Naive thymus-derived CD4-positive, alpha-beta T cell (primary cell): ENCODE measurements at regions of chr10 and their contacts with region 1.

Region 1: GRCh38 chr10:62528441-62528840 is 154.3 kb downstream of the ZNF365 start:
- DNase-seq: peak in 7 of 9 donors; percentile 42 to 83 (median 78)
- ATAC-seq: peak; percentile 95
- H3K4me3 ChIP-seq: no peak overlapping the region
- H3K4me3 Mint-ChIP-seq: peak overlapping the region; percentile 0 to 78 (median 70)
- H3K27ac ChIP-seq: peak overlapping the region; percentile 44
- H3K27ac Mint-ChIP-seq: peak overlapping the region; percentile 47 to 86 (median 75)
- H3K4me1 ChIP-seq: peaks cover 24 to 39% of the 10 kb centered on the region in 2 donors
- H3K4me1 Mint-ChIP-seq: peaks cover 32 to 49% (median 43%) of the 10 kb centered on the region in 7 donors
- H3K27me3 ChIP-seq: no peaks in the 10 kb centered on the region
- H3K27me3 Mint-ChIP-seq: peaks cover 0 to 15% (median 0%) of the 10 kb centered on the region in 5 donors

Region 2: DNA sequence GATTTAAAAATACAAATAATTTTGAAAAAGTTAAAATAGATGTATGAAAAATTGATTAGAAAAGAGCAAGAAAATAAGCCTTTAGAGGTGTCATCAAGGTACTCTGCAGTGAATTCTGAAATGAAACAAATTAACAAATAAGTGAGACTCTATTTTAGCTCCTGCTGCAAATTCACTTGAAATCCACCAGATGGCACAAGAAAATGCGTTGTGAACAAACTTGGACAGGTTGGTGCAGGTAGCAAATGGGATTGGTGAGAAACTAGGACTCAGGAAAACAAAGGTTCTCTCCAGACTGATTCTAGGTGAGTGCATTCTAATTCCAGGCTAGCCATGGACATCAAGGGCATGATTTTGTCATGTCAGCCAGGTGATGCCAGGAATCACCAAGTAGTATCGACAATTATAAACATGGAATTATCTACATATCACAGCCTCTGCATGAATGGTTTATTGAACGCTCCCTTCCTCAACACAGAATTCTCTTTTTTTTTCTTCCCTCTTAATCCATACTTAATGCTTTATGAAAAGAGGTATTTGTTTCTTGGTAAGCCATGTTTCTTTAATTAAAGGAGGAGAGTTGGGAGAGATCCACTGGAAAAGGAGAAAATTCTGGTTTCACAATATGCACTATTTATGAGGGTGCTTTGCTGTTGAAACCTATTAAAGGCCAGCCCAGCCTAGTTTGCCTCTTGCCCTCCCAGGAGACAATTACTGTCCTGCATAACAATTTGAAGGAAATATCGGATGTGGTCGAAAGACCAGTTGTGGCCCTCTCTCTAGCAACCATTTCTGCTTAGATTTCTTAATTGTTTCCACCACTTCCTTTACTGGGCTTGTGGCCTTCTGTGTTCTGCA is 36.2 kb before region 1 on chr10:
- CTCF ChIA-PET with region 1: no interaction called
- POLR2A ChIA-PET with region 1: no interaction called
- intact Hi-C with region 1: loop called (anchors 1 kb)
- DNase-seq: peak in 7 of 9 donors; percentile 14 to 53 (median 40)
- ATAC-seq: peak; percentile 54
- H3K4me3 ChIP-seq: no peak overlapping the region
- H3K4me3 Mint-ChIP-seq: no peak overlapping the region
- H3K27ac ChIP-seq: no peak overlapping the region
- H3K27ac Mint-ChIP-seq: no peak overlapping the region
- H3K4me1 ChIP-seq: no peaks in the 10 kb centered on the region
- H3K4me1 Mint-ChIP-seq: peaks cover 0 to 2% (median 0%) of the 10 kb centered on the region in 7 donors
- H3K27me3 ChIP-seq: no peaks in the 10 kb centered on the region
- H3K27me3 Mint-ChIP-seq: peaks cover 0 to 29% (median 4%) of the 10 kb centered on the region in 5 donors

Region 3: GRCh38 chr10:62554632-62555199 is 26.3 kb after region 1 on chr10:
- CTCF ChIA-PET with region 1: no interaction called
- POLR2A ChIA-PET with region 1: no interaction called
- intact Hi-C with region 1: loop called in 1 of 2 experiments (anchors 1 kb)
- DNase-seq: peak in 7 of 9 donors; percentile 8 to 34 (median 24)
- ATAC-seq: peak; percentile 67
- H3K4me3 ChIP-seq: no peak overlapping the region
- H3K4me3 Mint-ChIP-seq: no peak overlapping the region
- H3K27ac ChIP-seq: no peak overlapping the region
- H3K27ac Mint-ChIP-seq: no peak overlapping the region
- H3K4me1 ChIP-seq: no peaks in the 10 kb centered on the region
- H3K4me1 Mint-ChIP-seq: no peaks in the 10 kb centered on the region
- H3K27me3 ChIP-seq: no peaks in the 10 kb centered on the region
- H3K27me3 Mint-ChIP-seq: peaks cover 4 to 34% (median 11%) of the 10 kb centered on the region in 5 donors

Region 4: DNA sequence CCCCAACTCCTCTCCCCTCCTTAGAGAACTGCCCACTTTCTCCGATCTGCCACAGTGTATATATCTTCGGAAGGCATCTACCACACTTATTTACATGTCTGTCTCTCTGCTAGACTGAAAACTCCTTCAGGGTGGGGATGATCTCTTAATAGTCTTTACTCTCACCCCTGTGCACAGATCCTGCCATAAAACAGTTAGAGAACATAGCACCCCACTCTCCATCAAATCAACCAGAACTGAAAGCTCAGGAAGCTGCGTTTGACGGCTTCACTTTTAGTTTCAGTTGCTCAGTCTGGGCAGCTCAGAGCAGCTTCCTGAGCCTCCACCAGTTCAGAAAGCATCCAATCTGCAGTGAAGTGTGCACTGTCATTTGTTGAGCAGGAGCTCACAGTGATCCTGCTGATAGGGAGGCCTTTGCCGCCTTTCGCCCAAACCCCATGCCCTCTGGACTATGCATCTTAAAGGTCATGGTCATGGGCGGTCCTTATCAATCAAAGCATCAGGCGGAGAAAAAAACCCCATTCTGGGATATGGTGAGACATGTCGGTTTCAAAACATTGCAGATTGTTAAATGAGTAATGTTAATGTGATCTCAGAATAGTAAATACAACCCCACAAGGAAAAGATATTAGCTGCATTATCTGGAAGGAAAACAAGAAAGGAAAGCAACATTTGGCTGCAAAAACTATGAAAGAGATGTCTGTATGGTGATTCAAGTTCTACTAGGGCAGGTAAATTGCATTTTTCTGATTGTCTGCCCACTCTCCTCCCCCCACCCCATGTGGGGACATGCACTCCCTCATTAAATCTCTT is 109.0 kb after region 1 on chr10:
- CTCF ChIA-PET with region 1: no interaction called
- POLR2A ChIA-PET with region 1: interaction called, 4 read pairs
- intact Hi-C with region 1: loop called in 1 of 2 experiments (anchors 1 kb)
- DNase-seq: peak; percentile 32 to 82 (median 75)
- ATAC-seq: peak; percentile 86
- H3K4me3 ChIP-seq: peak overlapping the region; percentile 67
- H3K4me3 Mint-ChIP-seq: no peak overlapping the region
- H3K27ac ChIP-seq: peak overlapping the region; percentile 70
- H3K27ac Mint-ChIP-seq: no peak overlapping the region
- H3K4me1 ChIP-seq: peaks cover 18 to 41% of the 10 kb centered on the region in 2 donors
- H3K4me1 Mint-ChIP-seq: peaks cover 2 to 38% (median 6%) of the 10 kb centered on the region in 7 donors
- H3K27me3 ChIP-seq: no peaks in the 10 kb centered on the region
- H3K27me3 Mint-ChIP-seq: no peaks in the 10 kb centered on the region

Region 5: DNA sequence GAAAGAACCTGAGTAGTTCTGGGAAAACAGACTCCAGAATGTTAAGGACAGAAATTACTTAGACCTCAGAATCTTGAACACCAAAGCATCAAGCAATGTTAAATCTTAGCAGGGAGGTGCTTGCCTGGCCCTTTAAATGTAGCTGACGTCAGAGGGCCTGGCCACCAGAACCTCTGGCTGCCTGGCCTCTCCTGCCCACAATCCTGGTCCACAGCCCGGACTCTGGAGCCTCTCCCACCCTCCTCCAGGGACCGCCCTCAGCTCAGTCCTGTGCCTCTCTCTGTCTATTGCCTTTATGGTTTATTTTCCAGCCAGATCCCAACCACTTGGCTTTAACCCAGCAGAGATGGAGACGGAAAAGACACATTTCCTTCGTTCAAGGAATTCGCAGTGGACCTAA is 329.9 kb after region 1 on chr10:
- CTCF ChIA-PET with region 1: no interaction called
- POLR2A ChIA-PET with region 1: no interaction called
- intact Hi-C with region 1: loop called in 1 of 2 experiments (anchors 2 kb)
- DNase-seq: no peak
- ATAC-seq: no peak
- H3K4me3 ChIP-seq: no peak overlapping the region
- H3K4me3 Mint-ChIP-seq: no peak overlapping the region
- H3K27ac ChIP-seq: no peak overlapping the region
- H3K27ac Mint-ChIP-seq: no peak overlapping the region
- H3K4me1 ChIP-seq: peaks cover 0 to 38% of the 10 kb centered on the region in 2 donors
- H3K4me1 Mint-ChIP-seq: peaks cover 13 to 54% (median 24%) of the 10 kb centered on the region in 7 donors
- H3K27me3 ChIP-seq: no peaks in the 10 kb centered on the region
- H3K27me3 Mint-ChIP-seq: peaks cover 0 to 18% (median 13%) of the 10 kb centered on the region in 5 donors

Region 6: GRCh38 chr10:62934258-62934657 is 405.8 kb after region 1 on chr10:
- CTCF ChIA-PET with region 1: no interaction called
- POLR2A ChIA-PET with region 1: no interaction called
- intact Hi-C with region 1: no loop called
- DNase-seq: no peak
- ATAC-seq: no peak
- H3K4me3 ChIP-seq: no peak overlapping the region
- H3K4me3 Mint-ChIP-seq: no peak overlapping the region
- H3K27ac ChIP-seq: no peak overlapping the region
- H3K27ac Mint-ChIP-seq: no peak overlapping the region
- H3K4me1 ChIP-seq: no peaks in the 10 kb centered on the region
- H3K4me1 Mint-ChIP-seq: no peaks in the 10 kb centered on the region
- H3K27me3 ChIP-seq: no peaks in the 10 kb centered on the region
- H3K27me3 Mint-ChIP-seq: peaks cover 6 to 22% (median 16%) of the 10 kb centered on the region in 5 donors